Naive thymus-derived CD4-positive, alpha-beta T cell (primary cell): ENCODE measurements at regions of chr14 and their contacts with region 1.

Region 1: DNA sequence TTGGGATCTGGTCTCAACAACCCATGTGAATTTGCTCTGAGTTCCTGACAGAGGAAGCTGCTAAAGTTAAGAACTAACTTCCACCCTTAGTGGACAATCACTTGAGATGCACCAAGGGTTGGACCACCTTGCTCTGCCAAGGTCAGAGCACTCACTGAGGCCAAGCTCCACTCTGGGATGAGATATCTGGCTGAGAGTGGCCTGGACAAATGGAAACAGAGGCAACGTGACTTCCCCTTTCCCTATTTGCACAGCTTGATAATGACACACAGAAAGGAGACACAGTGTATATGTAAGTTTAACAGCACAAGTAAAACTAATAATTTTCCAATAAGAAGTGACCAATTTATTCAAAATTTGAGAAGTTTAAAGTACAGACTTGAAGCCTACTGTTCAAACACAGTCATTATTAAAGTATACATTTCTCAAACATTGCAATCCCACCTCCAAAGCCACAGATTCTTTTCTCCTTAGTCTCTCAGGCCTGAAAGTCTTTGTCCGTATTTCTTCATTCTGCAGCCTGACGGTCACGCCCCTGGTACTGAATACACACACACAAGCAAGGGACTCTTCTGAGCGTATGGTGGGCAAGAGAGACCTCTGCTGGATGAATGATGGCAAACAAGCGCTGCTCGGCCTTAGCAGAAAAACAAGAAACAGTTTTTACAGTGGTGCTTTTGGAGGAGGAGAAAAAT is 28.6 kb downstream of the TMEM30B start:
- DNase-seq: peak; percentile 12 to 68 (median 50)
- ATAC-seq: peak; percentile 95
- H3K4me3 ChIP-seq: no peak overlapping the region
- H3K4me3 Mint-ChIP-seq: no peak overlapping the region
- H3K27ac ChIP-seq: no peak overlapping the region
- H3K27ac Mint-ChIP-seq: no peak overlapping the region
- H3K4me1 ChIP-seq: no peaks in the 10 kb centered on the region
- H3K4me1 Mint-ChIP-seq: peaks cover 0 to 26% (median 0%) of the 10 kb centered on the region in 7 donors
- H3K27me3 ChIP-seq: peaks cover 0 to 4% of the 10 kb centered on the region in 2 donors
- H3K27me3 Mint-ChIP-seq: peaks cover 11 to 25% (median 17%) of the 10 kb centered on the region in 5 donors

Region 2: GRCh38 chr14:60064491-60065072 is 1187.9 kb before region 1 on chr14:
- CTCF ChIA-PET with region 1: interaction called, 3 read pairs
- POLR2A ChIA-PET with region 1: no interaction called
- intact Hi-C with region 1: loop called in 1 of 2 experiments (anchors 5 kb)
- DNase-seq: peak in 4 of 9 donors; percentile 28 to 39 (median 36)
- ATAC-seq: peak; percentile 70
- H3K4me3 ChIP-seq: no peak overlapping the region
- H3K4me3 Mint-ChIP-seq: no peak overlapping the region
- H3K27ac ChIP-seq: no peak overlapping the region
- H3K27ac Mint-ChIP-seq: no peak overlapping the region
- H3K4me1 ChIP-seq: no peaks in the 10 kb centered on the region
- H3K4me1 Mint-ChIP-seq: no peaks in the 10 kb centered on the region
- H3K27me3 ChIP-seq: no peaks in the 10 kb centered on the region
- H3K27me3 Mint-ChIP-seq: peaks cover 0 to 7% (median 4%) of the 10 kb centered on the region in 5 donors

Region 3: GRCh38 chr14:60349663-60350365 is 902.7 kb before region 1 on chr14:
- CTCF ChIA-PET with region 1: interaction called, 4 read pairs
- POLR2A ChIA-PET with region 1: no interaction called
- intact Hi-C with region 1: loop called (anchors 1 kb)
- DNase-seq: peak in 6 of 9 donors; percentile 2 to 37 (median 24)
- ATAC-seq: peak; percentile 54
- H3K4me3 ChIP-seq: no peak overlapping the region
- H3K4me3 Mint-ChIP-seq: no peak overlapping the region
- H3K27ac ChIP-seq: no peak overlapping the region
- H3K27ac Mint-ChIP-seq: no peak overlapping the region
- H3K4me1 ChIP-seq: no peaks in the 10 kb centered on the region
- H3K4me1 Mint-ChIP-seq: peaks cover 0 to 12% (median 3%) of the 10 kb centered on the region in 7 donors
- H3K27me3 ChIP-seq: peaks cover 0 to 3% of the 10 kb centered on the region in 2 donors
- H3K27me3 Mint-ChIP-seq: peaks cover 0 to 27% (median 12%) of the 10 kb centered on the region in 5 donors

Region 4: GRCh38 chr14:60622917-60623257 is 629.6 kb before region 1 on chr14:
- CTCF ChIA-PET with region 1: interaction called, 18 read pairs
- POLR2A ChIA-PET with region 1: interaction called, 3 read pairs
- intact Hi-C with region 1: loop called (anchors 1 kb)
- DNase-seq: no peak
- ATAC-seq: no peak
- H3K4me3 ChIP-seq: no peak overlapping the region
- H3K4me3 Mint-ChIP-seq: no peak overlapping the region
- H3K27ac ChIP-seq: no peak overlapping the region
- H3K27ac Mint-ChIP-seq: no peak overlapping the region
- H3K4me1 ChIP-seq: no peaks in the 10 kb centered on the region
- H3K4me1 Mint-ChIP-seq: peaks cover 0 to 2% (median 0%) of the 10 kb centered on the region in 7 donors
- H3K27me3 ChIP-seq: no peaks in the 10 kb centered on the region
- H3K27me3 Mint-ChIP-seq: peaks cover 25 to 47% (median 34%) of the 10 kb centered on the region in 5 donors

Region 5: DNA sequence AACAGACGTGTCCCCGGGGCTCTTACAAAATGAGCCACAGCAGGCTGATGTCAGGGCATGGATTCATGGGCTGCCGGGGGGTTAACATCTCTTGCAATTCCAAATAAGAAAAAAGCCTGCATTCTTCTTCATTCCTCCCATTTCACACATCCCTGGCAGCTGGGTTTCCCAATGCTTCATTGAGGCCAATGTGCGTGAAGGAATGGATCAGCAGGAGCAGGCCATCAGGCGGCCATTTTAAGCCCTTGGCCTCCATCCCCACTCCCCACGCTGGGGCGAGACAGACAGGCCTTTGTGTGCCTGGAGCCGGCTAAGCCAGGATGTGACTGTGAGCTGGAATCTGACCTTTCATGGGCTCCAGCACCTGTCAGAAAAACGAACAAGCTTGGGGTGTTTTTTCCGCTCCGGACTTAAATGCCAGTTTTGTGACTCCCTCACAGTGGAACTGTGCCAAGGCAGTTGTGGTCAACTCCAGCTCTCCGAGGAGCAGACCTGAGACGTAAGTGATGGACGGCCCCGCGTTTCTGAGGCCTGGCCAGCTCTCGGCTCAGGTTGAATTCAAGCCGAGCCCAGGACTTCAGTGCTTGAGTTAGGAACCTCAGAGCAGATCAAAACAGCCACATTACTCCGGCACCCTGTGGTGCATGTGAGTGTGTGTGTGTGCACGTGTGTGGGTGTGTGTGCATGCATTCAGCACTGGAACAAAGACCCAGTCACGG is 104.5 kb before region 1 on chr14:
- CTCF ChIA-PET with region 1: no interaction called
- POLR2A ChIA-PET with region 1: no interaction called
- intact Hi-C with region 1: no loop called
- DNase-seq: no peak
- ATAC-seq: no peak
- H3K4me3 ChIP-seq: no peak overlapping the region
- H3K4me3 Mint-ChIP-seq: no peak overlapping the region
- H3K27ac ChIP-seq: no peak overlapping the region
- H3K27ac Mint-ChIP-seq: no peak overlapping the region
- H3K4me1 ChIP-seq: no peaks in the 10 kb centered on the region
- H3K4me1 Mint-ChIP-seq: no peaks in the 10 kb centered on the region
- H3K27me3 ChIP-seq: no peaks in the 10 kb centered on the region
- H3K27me3 Mint-ChIP-seq: peaks cover 1 to 9% (median 6%) of the 10 kb centered on the region in 5 donors

Region 6: GRCh38 chr14:61308198-61308597 is 55.7 kb after region 1 on chr14:
- CTCF ChIA-PET with region 1: no interaction called
- POLR2A ChIA-PET with region 1: no interaction called
- intact Hi-C with region 1: no loop called
- DNase-seq: no peak
- ATAC-seq: no peak
- H3K4me3 ChIP-seq: no peak overlapping the region
- H3K4me3 Mint-ChIP-seq: peak overlapping the region in 1 of 10 donors; percentile 11
- H3K27ac ChIP-seq: no peak overlapping the region
- H3K27ac Mint-ChIP-seq: peak overlapping the region in 1 of 9 donors; percentile 26
- H3K4me1 ChIP-seq: peaks cover 0 to 7% of the 10 kb centered on the region in 2 donors
- H3K4me1 Mint-ChIP-seq: peaks cover 6 to 26% (median 19%) of the 10 kb centered on the region in 7 donors
- H3K27me3 ChIP-seq: no peaks in the 10 kb centered on the region
- H3K27me3 Mint-ChIP-seq: no peaks in the 10 kb centered on the region